ENCODE measurements at regions of chr7 and their contacts with region 1.

Region 1: DNA sequence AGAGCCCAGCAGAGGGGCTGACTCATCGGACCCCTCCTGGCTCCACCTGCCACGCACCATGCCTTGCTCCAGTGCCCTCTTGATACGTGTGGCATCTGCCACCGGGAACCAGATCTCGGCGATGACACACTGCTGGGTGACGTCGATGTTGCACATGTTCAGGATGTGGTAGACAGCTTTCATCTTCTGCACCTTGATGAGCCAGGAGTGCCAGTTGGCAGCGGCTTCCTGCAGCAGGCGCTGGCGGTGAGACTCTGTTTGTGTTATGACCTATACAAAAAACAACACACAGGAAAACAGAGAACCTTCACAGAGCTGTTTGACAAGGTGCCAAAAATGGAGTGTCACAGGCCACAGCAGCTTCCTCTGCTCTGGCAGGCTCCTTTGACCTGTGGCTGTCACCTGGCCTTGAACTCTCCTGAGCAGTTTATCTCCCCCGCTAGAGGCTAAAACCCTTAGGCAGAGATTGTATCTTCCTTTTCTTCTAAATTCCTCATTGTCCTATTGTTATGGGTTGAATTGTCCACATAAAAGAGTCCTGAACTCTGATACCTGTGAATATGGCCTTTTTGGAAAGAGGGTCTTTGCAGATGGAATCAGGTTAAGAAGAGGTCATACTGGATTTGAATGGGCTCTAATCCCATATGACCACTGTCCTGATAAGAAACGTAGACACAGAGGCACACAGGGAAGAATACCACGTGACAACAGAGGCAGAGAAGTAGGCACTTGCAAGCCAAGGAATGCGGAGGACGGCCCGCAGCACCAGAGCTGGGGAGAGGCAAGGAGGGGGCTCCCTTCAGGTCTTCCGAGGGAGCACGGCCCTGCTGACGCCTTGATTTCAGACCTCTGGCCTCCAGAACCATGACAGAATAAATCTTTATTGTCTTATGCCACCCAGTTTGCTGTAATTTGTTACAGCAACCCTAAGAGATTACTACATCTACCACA is 45.0 kb upstream of the TMEM213 start:
- DNase-seq: peak; percentile 85 to 99 (median 91)
- ATAC-seq: peak; percentile 91
- H3K4me3 ChIP-seq: peak overlapping the region in 1 of 2 experiments; percentile 12
- H3K4me3 Mint-ChIP-seq: peak overlapping the region; percentile 49
- H3K27ac ChIP-seq: peak overlapping the region; percentile 53 to 75
- H3K27ac Mint-ChIP-seq: peak overlapping the region; percentile 95
- H3K4me1 ChIP-seq: peaks cover 33% of the 10 kb centered on the region
- H3K4me1 Mint-ChIP-seq: peaks cover 63% of the 10 kb centered on the region
- H3K27me3 ChIP-seq: no peaks in the 10 kb centered on the region
- H3K27me3 Mint-ChIP-seq: no peaks in the 10 kb centered on the region
- CTCF ChIP-seq: no peak

Region 2: DNA sequence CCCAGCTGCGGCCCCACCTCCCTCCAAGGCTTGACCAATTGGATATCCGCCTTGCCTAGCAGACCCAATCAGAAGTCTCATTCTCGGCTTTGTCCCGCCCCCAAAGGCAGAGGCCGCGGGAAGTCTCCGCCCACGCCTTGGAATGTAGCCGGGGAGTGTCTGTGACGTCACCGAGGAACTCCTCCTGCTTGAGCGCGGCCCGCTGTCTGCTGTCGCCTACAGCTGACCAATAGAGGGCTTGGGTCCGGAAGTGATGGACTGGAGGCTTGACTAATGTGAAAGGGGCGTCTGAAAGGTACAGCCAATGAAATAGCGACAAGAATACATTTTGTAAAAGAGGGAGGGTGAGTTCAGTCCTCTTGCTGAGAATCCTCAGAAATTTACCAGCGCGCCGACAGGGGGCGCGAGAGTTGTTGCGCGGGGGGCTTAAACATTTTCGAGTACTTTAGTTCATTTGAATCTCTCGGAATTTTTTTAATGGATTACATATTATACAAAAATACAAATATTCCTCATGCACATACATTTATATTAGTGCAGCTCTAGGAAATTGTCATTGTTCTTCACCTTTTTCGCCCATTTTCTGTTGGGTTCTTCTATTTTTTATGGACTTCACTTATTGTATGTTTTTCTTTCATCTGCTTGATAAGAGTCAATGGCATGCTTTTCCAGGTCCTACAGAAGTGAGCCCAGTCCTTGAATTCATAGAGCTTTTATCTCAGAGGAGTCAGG is 750.6 kb before region 1 on chr7:
- CTCF ChIA-PET with region 1: no interaction called
- POLR2A ChIA-PET with region 1: no interaction called
- intact Hi-C with region 1: loop called (anchors 1 to 5 kb)
- DNase-seq: peak; percentile 96 to 100 (median 98)
- ATAC-seq: peak; percentile 88
- H3K4me3 ChIP-seq: peak overlapping the region; percentile 81 to 97
- H3K4me3 Mint-ChIP-seq: peak overlapping the region; percentile 90
- H3K27ac ChIP-seq: peak overlapping the region; percentile 72 to 85
- H3K27ac Mint-ChIP-seq: peak overlapping the region; percentile 91
- H3K4me1 ChIP-seq: peaks cover 11% of the 10 kb centered on the region
- H3K4me1 Mint-ChIP-seq: peaks cover 33% of the 10 kb centered on the region
- H3K27me3 ChIP-seq: no peaks in the 10 kb centered on the region
- H3K27me3 Mint-ChIP-seq: no peaks in the 10 kb centered on the region
- CTCF ChIP-seq: peak; percentile 96

Region 3: DNA sequence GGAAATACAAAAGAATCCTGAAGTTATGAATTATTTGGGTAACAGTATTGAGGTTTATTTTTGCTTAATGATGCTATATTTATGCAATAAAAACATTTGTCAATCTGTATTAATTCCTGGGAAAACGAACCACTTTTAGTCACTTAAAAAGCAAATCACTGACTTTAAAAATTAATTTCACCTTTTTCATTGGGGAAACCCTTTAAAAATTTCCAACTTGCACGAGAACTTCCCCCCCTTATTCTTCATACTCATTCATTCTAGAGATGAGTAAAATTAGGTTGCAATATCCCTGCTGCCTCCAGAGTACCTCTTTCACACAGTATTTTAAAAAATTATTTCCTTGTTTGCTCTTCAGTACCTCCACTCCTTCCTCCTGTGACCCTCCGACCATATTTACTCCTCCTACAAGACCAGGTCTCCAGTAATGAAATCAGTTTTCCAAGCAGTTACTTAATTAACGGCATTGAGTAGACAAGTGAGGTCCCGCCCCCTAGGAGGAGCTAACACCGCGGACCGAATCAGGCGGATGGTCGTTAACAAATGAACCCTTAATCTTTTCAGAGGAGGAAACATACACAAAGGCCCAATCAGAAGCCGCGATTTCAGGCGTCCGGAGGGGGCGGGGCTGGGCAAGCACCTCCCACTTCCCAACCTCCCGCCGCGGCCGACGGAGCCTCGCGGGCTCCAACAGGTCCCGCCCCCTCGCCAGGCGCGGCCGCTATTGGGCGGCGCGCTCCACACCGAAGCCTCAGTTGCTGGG is 293.2 kb before region 1 on chr7:
- CTCF ChIA-PET with region 1: no interaction called
- POLR2A ChIA-PET with region 1: interaction called, 6 read pairs
- intact Hi-C with region 1: loop called (anchors 1 to 2 kb)
- DNase-seq: peak; percentile 95 to 99 (median 97)
- ATAC-seq: peak; percentile 85
- H3K4me3 ChIP-seq: peak overlapping the region; percentile 18 to 42
- H3K4me3 Mint-ChIP-seq: peak overlapping the region; percentile 96
- H3K27ac ChIP-seq: peak overlapping the region in 1 of 2 experiments; percentile 2
- H3K27ac Mint-ChIP-seq: peak overlapping the region; percentile 86
- H3K4me1 ChIP-seq: peaks cover 14% of the 10 kb centered on the region
- H3K4me1 Mint-ChIP-seq: peaks cover 28% of the 10 kb centered on the region
- H3K27me3 ChIP-seq: no peaks in the 10 kb centered on the region
- H3K27me3 Mint-ChIP-seq: no peaks in the 10 kb centered on the region
- CTCF ChIP-seq: no peak

Region 4: GRCh38 chr7:138776166-138776894 is 23.5 kb after region 1 on chr7:
- CTCF ChIA-PET with region 1: no interaction called
- POLR2A ChIA-PET with region 1: no interaction called
- intact Hi-C with region 1: no loop called
- DNase-seq: no peak
- ATAC-seq: no peak
- H3K4me3 ChIP-seq: no peak overlapping the region
- H3K4me3 Mint-ChIP-seq: no peak overlapping the region
- H3K27ac ChIP-seq: no peak overlapping the region
- H3K27ac Mint-ChIP-seq: no peak overlapping the region
- H3K4me1 ChIP-seq: no peaks in the 10 kb centered on the region
- H3K4me1 Mint-ChIP-seq: no peaks in the 10 kb centered on the region
- H3K27me3 ChIP-seq: no peaks in the 10 kb centered on the region
- H3K27me3 Mint-ChIP-seq: no peaks in the 10 kb centered on the region
- CTCF ChIP-seq: no peak

Region 5: DNA sequence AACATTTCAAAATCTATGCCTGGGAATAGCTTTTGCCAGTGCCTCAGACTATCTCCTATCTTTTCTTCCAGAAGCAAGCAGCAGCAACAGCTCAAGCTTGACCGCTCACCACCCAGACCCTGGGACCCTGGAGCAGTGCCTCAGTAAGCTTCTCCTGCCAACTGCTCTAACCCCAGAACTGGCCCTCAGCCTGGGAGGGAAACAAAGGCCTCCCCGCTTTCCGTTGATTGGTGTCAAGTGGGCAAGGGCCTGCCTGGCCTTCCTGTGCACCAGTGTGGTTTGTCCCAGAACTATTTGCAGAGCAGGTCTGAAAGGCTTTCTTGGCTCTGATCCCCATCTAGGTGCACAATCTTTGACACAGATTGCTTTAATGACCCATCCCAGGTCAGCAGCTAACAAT is 48.4 kb after region 1 on chr7:
- CTCF ChIA-PET with region 1: no interaction called
- POLR2A ChIA-PET with region 1: no interaction called
- intact Hi-C with region 1: no loop called
- DNase-seq: no peak
- ATAC-seq: no peak
- H3K4me3 ChIP-seq: no peak overlapping the region
- H3K4me3 Mint-ChIP-seq: no peak overlapping the region
- H3K27ac ChIP-seq: no peak overlapping the region
- H3K27ac Mint-ChIP-seq: no peak overlapping the region
- H3K4me1 ChIP-seq: peaks cover 3% of the 10 kb centered on the region
- H3K4me1 Mint-ChIP-seq: peaks cover 11% of the 10 kb centered on the region
- H3K27me3 ChIP-seq: no peaks in the 10 kb centered on the region
- H3K27me3 Mint-ChIP-seq: no peaks in the 10 kb centered on the region
- CTCF ChIP-seq: no peak

Region 6: GRCh38 chr7:138875794-138876193 is 123.0 kb after region 1 on chr7:
- CTCF ChIA-PET with region 1: no interaction called
- POLR2A ChIA-PET with region 1: interaction called, 3 read pairs
- intact Hi-C with region 1: loop called (anchors 1 to 5 kb)
- DNase-seq: peak; percentile 21 to 90 (median 61)
- ATAC-seq: peak; percentile 96
- H3K4me3 ChIP-seq: no peak overlapping the region
- H3K4me3 Mint-ChIP-seq: no peak overlapping the region
- H3K27ac ChIP-seq: no peak overlapping the region
- H3K27ac Mint-ChIP-seq: peak overlapping the region; percentile 64
- H3K4me1 ChIP-seq: peaks cover 11% of the 10 kb centered on the region
- H3K4me1 Mint-ChIP-seq: peaks cover 15% of the 10 kb centered on the region
- H3K27me3 ChIP-seq: no peaks in the 10 kb centered on the region
- H3K27me3 Mint-ChIP-seq: no peaks in the 10 kb centered on the region
- CTCF ChIP-seq: no peak

Region 7: DNA sequence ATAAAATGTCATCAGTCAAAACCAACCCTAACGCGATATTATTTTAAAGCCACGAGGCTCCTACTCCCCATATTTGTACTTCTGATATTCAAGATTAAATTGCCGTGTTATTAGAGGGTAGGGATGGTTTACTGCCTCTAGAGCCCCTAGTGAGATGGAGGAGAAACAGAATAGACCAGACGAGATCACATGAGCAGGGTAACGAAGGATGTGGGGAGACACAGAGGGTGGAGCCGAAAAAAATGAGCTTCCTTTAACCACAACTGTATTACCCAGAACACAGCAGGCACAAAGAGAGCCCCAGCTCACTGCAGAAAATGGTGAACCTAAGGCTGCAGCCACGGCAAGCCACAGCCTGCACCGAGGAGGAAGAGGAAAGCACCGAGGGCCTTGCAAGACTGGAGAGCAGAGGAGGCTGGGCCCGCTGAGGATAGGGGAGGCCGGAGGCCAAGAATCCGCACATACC is 342.4 kb after region 1 on chr7:
- CTCF ChIA-PET with region 1: no interaction called
- POLR2A ChIA-PET with region 1: interaction called, 3 read pairs
- intact Hi-C with region 1: loop called in 1 of 2 experiments (anchors 2 kb)
- DNase-seq: peak; percentile 57 to 96 (median 82)
- ATAC-seq: peak; percentile 84
- H3K4me3 ChIP-seq: peak overlapping the region; percentile 34 to 53
- H3K4me3 Mint-ChIP-seq: peak overlapping the region; percentile 84
- H3K27ac ChIP-seq: peak overlapping the region; percentile 61 to 76
- H3K27ac Mint-ChIP-seq: peak overlapping the region; percentile 95
- H3K4me1 ChIP-seq: peaks cover 82% of the 10 kb centered on the region
- H3K4me1 Mint-ChIP-seq: peaks cover 86% of the 10 kb centered on the region
- H3K27me3 ChIP-seq: no peaks in the 10 kb centered on the region
- H3K27me3 Mint-ChIP-seq: no peaks in the 10 kb centered on the region
- CTCF ChIP-seq: no peak

Region 8: DNA sequence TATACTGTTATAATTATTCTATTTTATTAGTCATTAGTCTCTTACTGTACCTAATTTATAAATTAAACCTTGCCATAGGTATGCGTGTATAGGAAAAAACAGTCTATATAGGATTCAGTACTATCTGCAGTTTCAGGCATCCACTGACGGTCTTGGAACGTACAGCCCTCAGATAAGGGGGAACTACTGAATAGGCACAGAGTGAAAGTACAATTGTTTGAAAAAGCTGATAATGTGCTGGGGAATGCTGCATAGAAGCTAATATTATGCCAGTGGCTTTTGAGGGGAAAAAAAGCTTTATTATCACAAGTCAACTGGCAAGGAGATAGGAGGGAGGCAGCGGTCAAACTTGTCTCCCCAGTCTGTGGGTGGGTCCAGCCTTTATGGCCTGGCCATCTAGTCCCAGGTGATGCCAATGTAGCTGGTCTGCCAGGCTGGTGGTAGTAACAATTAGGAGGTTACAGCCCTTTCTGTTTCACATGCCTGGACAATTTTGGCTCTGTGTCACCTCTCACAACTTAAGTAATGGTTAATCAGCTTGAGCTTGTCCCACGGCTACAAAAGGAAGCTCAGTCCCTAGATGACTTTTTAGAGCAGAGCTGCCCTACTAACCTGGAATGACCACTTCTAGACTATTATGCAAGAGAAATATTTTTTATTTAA is 580.0 kb after region 1 on chr7:
- CTCF ChIA-PET with region 1: no interaction called
- POLR2A ChIA-PET with region 1: no interaction called
- intact Hi-C with region 1: loop called in 1 of 2 experiments (anchors 10 kb)
- DNase-seq: no peak
- ATAC-seq: no peak
- H3K4me3 ChIP-seq: no peak overlapping the region
- H3K4me3 Mint-ChIP-seq: no peak overlapping the region
- H3K27ac ChIP-seq: no peak overlapping the region
- H3K27ac Mint-ChIP-seq: no peak overlapping the region
- H3K4me1 ChIP-seq: no peaks in the 10 kb centered on the region
- H3K4me1 Mint-ChIP-seq: peaks cover 12% of the 10 kb centered on the region
- H3K27me3 ChIP-seq: no peaks in the 10 kb centered on the region
- H3K27me3 Mint-ChIP-seq: no peaks in the 10 kb centered on the region
- CTCF ChIP-seq: no peak